Calu3 (cell line): ENCODE measurements at regions of chr1 and their contacts with region 1.

Region 1: GRCh38 chr1:117284399-117285215 is 73.9 kb upstream of the VTCN1 start:
- DNase-seq: peak; percentile 17
- H3K4me3 Mint-ChIP-seq: no peak overlapping the region
- H3K27ac Mint-ChIP-seq: no peak overlapping the region
- H3K4me1 Mint-ChIP-seq: peaks cover 8% of the 10 kb centered on the region
- H3K27me3 Mint-ChIP-seq: no peaks in the 10 kb centered on the region
- CTCF ChIP-seq: peak; percentile 45

Region 2: GRCh38 chr1:117067533-117068370 is 216.9 kb before region 1 on chr1:
- CTCF ChIA-PET with region 1: interaction called, 18 read pairs
- intact Hi-C with region 1: loop called (anchors 1 kb)
- DNase-seq: peak; percentile 33
- H3K4me3 Mint-ChIP-seq: no peak overlapping the region
- H3K27ac Mint-ChIP-seq: no peak overlapping the region
- H3K4me1 Mint-ChIP-seq: no peaks in the 10 kb centered on the region
- H3K27me3 Mint-ChIP-seq: no peaks in the 10 kb centered on the region
- CTCF ChIP-seq: no peak

Region 3: DNA sequence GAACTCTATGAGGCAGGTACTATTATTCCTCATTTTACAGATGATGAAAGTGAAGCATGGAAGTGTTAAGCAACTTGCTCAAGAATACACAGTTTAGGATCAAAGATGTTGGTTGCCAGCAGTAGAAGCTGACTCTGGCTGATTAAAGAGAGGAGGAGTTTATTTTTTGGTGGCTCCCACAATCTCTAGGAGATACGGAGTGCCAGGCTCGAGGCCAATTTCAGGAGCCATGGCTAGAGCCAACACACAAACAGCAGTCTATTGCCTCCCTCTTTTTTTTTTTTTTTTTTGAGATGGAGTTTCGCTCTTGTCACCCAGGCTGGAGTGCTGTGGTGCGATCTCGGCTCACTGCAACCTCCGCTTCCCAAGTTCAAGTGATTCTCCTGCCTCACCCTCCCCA is 204.9 kb before region 1 on chr1:
- CTCF ChIA-PET with region 1: no interaction called
- intact Hi-C with region 1: no loop called
- DNase-seq: no peak
- H3K4me3 Mint-ChIP-seq: no peak overlapping the region
- H3K27ac Mint-ChIP-seq: no peak overlapping the region
- H3K4me1 Mint-ChIP-seq: no peaks in the 10 kb centered on the region
- H3K27me3 Mint-ChIP-seq: no peaks in the 10 kb centered on the region
- CTCF ChIP-seq: no peak

Region 4: DNA sequence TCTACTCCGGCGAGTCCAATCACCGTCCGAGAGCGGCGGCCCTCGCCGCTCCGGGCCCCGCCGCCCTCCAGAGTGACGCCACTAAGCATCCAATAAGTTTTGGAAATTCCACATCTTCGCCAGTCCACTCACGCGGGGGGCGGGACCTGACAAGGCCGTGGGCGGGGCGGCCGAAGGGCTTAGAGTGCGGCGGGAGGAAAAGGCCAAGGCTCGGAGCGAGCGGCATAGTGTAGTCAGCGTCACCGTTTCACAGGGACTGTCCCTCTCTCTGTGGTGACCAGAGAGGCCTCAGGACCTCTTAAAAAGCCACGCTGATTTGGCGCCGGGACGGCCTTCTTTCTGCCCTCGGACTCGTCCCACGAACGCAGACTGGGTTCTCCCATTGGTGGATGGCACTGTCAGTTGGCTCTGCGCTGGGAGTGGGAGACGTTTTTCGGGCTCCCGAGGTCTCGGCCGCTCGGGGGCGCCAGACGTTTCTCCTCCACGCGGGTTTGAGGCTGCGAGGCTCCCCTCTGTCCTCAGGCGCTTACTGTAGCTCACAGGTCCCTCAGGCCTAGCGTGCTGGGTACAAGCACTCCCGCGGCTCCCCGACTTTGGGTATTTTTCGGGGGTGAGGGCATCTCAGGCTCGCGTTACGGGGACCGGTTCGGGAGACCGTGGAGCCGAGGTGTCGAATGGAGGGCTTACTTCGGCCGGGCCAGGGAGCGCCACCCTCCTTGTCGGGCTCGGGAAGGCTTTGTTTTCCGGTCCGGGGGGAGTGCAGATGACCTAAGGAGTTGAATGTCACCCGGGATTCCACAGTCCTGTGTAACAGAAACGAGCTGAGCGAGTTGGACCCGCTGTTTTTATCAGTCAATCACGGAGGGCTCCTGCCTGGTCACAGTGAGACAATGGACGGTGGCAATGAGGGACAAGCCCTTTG is 162.6 kb before region 1 on chr1:
- CTCF ChIA-PET with region 1: interaction called, 18 read pairs
- intact Hi-C with region 1: loop called (anchors 1 kb)
- DNase-seq: peak; percentile 91
- H3K4me3 Mint-ChIP-seq: peak overlapping the region; percentile 85
- H3K27ac Mint-ChIP-seq: peak overlapping the region; percentile 64
- H3K4me1 Mint-ChIP-seq: peaks cover 19% of the 10 kb centered on the region
- H3K27me3 Mint-ChIP-seq: no peaks in the 10 kb centered on the region
- CTCF ChIP-seq: peak; percentile 66

Region 5: DNA sequence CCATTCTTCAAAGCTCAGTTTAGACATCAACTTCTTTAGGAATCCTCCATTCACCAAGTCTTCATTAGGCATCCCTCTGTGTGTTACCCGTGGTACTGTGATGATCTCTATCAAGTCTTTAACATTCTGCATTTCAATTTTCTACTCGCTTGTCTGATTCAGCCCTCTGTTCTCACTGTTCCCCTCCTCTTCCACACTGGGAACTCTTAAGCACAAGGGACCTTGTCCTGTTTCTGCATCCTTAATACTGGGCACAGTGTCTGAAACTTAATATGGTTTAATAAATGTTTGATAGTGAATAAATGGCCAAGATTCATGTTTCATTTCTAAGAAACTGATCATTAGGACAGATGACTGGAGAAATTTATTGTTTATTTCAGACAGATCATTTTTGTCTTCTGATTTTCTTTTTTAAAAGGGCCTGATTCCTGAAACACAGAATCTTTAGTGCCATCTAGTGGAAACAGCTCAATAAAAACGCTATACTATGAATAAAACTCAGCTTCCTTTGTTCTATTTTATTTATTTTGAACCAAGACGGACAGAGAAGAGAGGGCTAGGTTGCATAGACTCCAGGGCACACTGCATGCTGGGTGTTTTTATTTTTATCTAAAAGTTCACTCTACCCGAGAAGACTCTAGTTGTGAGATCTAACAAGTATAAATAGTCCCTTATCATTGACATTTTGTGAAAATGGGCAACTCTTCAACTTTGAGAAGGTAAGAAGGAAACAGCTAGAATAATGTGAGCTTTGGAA is 156.1 kb before region 1 on chr1:
- CTCF ChIA-PET with region 1: interaction called, 15 read pairs
- intact Hi-C with region 1: loop called (anchors 2 kb)
- DNase-seq: no peak
- H3K4me3 Mint-ChIP-seq: no peak overlapping the region
- H3K27ac Mint-ChIP-seq: no peak overlapping the region
- H3K4me1 Mint-ChIP-seq: peaks cover 11% of the 10 kb centered on the region
- H3K27me3 Mint-ChIP-seq: no peaks in the 10 kb centered on the region
- CTCF ChIP-seq: peak; percentile 19

Region 6: GRCh38 chr1:117146570-117147346 is 137.8 kb before region 1 on chr1:
- CTCF ChIA-PET with region 1: interaction called, 4 read pairs
- intact Hi-C with region 1: loop called (anchors 2 kb)
- DNase-seq: peak; percentile 63
- H3K4me3 Mint-ChIP-seq: peak overlapping the region; percentile 59
- H3K27ac Mint-ChIP-seq: peak overlapping the region; percentile 95
- H3K4me1 Mint-ChIP-seq: peaks cover 54% of the 10 kb centered on the region
- H3K27me3 Mint-ChIP-seq: no peaks in the 10 kb centered on the region
- CTCF ChIP-seq: no peak

Region 7: DNA sequence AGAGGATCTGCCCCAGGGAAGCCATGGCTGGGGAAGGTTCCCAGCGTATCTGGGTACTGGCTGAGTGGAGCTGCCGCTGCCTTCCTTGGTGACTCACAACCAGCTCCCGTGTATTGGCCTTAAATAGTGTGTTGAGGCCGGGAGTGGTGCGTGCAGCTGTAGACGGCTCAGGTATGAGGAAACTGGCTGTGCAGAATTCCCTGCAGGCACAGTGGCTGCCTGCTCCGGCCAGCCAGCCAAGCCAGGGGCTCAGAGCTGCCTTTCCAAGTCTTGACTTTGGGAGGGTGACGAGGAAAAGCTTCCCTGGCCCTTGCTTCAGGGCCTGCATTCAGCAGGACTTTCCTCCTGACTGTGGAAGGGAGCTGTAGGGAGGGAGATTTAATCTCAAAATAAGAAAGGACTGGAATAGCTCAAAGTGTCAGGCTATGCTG is 73.8 kb before region 1 on chr1 and contains the start of gene VTCN1:
- CTCF ChIA-PET with region 1: interaction called, 13 read pairs
- intact Hi-C with region 1: loop called (anchors 5 kb)
- DNase-seq: peak; percentile 81
- H3K4me3 Mint-ChIP-seq: peak within 1 kb of the TSS; percentile 68
- H3K27ac Mint-ChIP-seq: peak within 1 kb of the TSS; percentile 72
- H3K4me1 Mint-ChIP-seq: peaks cover 49% of the 10 kb centered on the region
- H3K27me3 Mint-ChIP-seq: no peaks in the 10 kb centered on the region
- CTCF ChIP-seq: no peak
- total RNA-seq, gene VTCN1: 35.7 and 39.1 TPM in 2 replicates